Mucosa of descending colon (tissue), 3 donors: ENCODE measurements at regions of chr4 and their contacts with region 1.

Region 1: DNA sequence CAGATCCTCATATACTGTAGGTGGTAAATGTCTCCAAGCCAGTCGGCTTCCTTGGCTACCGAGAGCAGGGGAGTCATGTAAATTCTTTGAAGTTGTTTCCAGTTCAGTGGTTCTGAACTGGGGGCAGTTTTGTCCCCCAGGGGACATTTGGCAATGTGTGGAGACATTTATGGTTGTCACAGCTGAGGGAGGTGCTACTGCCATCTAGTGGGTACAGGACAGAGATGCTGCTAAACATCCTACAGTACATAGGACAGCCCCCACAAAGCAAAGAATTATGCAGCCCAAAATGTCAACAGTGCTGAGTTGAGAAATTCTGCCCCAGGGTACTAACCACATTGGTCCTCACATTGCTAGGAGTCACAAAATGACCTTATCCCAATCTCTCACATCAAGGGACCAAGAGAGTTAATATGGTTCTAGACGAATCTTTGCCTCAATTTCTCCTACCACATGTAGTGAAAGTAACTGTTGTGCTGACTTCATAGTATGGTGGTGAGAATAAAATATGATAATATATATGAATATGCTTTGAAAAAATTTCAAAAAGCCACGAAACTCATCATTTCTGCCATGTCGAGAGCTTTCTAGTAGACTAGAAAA is 104.4 kb upstream of the ARHGAP24 start:
- DNase-seq: peak in 2 of 3 donors; percentile 20 to 55
- ATAC-seq: peak; percentile 65
- H3K4me3 ChIP-seq: no peak overlapping the region
- H3K4me1 ChIP-seq: no peaks in the 10 kb centered on the region
- CTCF ChIP-seq: peak; percentile 27

Region 2: GRCh38 chr4:85147439-85148076 is 223.0 kb before region 1 on chr4:
- intact Hi-C with region 1: loop called in 1 of 2 experiments (anchors 5 kb)
- DNase-seq: peak in 1 of 3 donors; percentile 64
- ATAC-seq: peak; percentile 72
- H3K4me3 ChIP-seq: no peak overlapping the region
- H3K4me1 ChIP-seq: no peaks in the 10 kb centered on the region
- CTCF ChIP-seq: peak; percentile 18

Region 3: GRCh38 chr4:85445050-85445639 is 74.6 kb after region 1 on chr4:
- intact Hi-C with region 1: no loop called
- DNase-seq: no peak
- ATAC-seq: no peak
- H3K4me3 ChIP-seq: no peak overlapping the region
- H3K4me1 ChIP-seq: no peaks in the 10 kb centered on the region
- CTCF ChIP-seq: no peak